H1 (cell line): ENCODE measurements at regions of chr12 and their contacts with region 1.

Region 1: GRCh38 chr12:69900720-69901131 is 75.7 kb downstream of the MYRFL start:
- DNase-seq: peak in 1 of 2 experiments; percentile 88
- H3K4me3 ChIP-seq: no peak overlapping the region
- H3K27ac ChIP-seq: no peak overlapping the region
- H3K4me1 ChIP-seq: peaks cover 2 to 27% (median 18%) of the 10 kb centered on the region in 4 experiments; a peak in 6 of 7 replicates
- H3K27me3 ChIP-seq: no peaks in the 10 kb centered on the region
- CTCF ChIP-seq: peak; percentile 5 to 75 (median 69)
- EP300 ChIP-seq: peak in 1 of 2 experiments; percentile 53; a peak in 1 of 3 replicates
- POLR2A ChIP-seq: no peak
- RAD21 ChIP-seq: peak; percentile 92 to 95

Region 2: GRCh38 chr12:69553627-69554248 is 347.0 kb before region 1 on chr12:
- CTCF ChIA-PET with region 1: no interaction called
- POLR2A ChIA-PET with region 1: no interaction called
- DNase-seq: no peak
- H3K4me3 ChIP-seq: no peak overlapping the region
- H3K27ac ChIP-seq: no peak overlapping the region
- H3K4me1 ChIP-seq: peaks cover 0 to 2% (median 0%) of the 10 kb centered on the region in 4 experiments; a peak in 1 of 7 replicates
- H3K27me3 ChIP-seq: no peaks in the 10 kb centered on the region
- CTCF ChIP-seq: no peak
- EP300 ChIP-seq: no peak
- POLR2A ChIP-seq: no peak
- RAD21 ChIP-seq: no peak

Region 3: DNA sequence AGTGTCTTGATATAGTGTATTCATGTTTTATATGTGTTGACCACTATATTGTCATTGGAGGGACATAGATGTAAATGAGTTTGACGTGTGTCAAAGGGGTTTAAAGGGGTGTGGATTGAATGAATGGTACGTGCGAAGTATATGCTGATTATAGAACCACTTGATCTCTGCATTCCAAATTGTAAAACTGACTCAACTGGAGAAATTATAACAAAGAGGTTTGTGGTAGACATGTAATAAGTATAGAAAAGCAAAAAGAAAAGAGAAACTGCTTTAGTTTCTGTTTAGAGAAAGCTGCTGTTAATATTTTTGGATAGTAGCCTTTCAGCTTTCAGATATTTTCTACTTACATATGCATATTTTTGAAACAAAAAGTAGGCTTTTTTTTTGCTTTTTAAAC is 84.6 kb before region 1 on chr12:
- CTCF ChIA-PET with region 1: no interaction called
- POLR2A ChIA-PET with region 1: no interaction called
- DNase-seq: no peak
- H3K4me3 ChIP-seq: no peak overlapping the region
- H3K27ac ChIP-seq: no peak overlapping the region
- H3K4me1 ChIP-seq: no peaks in the 10 kb centered on the region
- H3K27me3 ChIP-seq: no peaks in the 10 kb centered on the region
- CTCF ChIP-seq: no peak
- EP300 ChIP-seq: no peak
- POLR2A ChIP-seq: no peak
- RAD21 ChIP-seq: no peak

Region 4: DNA sequence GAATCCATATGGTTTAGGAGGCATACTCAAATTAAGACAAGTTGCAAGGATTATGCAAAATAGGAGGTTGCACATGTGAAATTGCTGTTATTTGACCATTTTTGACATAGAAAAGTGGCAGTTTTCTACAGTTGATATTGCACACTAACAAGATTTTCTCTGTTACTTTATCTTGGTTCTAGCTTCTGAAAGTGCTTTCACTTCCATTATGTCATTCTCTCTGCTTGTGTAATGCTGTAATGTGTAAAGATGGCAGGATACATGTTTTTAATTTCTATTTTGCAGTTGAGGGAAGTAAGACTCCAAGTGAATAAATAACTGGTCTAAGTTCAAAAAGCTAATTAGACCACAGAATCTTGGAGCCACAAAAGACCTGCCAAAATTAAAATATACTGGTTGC is 15.1 kb before region 1 on chr12:
- CTCF ChIA-PET with region 1: interaction called, 29 read pairs
- POLR2A ChIA-PET with region 1: interaction called, 3 read pairs
- DNase-seq: no peak
- H3K4me3 ChIP-seq: no peak overlapping the region
- H3K27ac ChIP-seq: no peak overlapping the region
- H3K4me1 ChIP-seq: 0 out of 7 replicates have a peak, but pooled peaks cover 0 to 2% (median 0%) of the 10 kb centered on the region in 4 experiments
- H3K27me3 ChIP-seq: no peaks in the 10 kb centered on the region
- CTCF ChIP-seq: no peak
- EP300 ChIP-seq: no peak
- POLR2A ChIP-seq: no peak
- RAD21 ChIP-seq: no peak

Region 5: DNA sequence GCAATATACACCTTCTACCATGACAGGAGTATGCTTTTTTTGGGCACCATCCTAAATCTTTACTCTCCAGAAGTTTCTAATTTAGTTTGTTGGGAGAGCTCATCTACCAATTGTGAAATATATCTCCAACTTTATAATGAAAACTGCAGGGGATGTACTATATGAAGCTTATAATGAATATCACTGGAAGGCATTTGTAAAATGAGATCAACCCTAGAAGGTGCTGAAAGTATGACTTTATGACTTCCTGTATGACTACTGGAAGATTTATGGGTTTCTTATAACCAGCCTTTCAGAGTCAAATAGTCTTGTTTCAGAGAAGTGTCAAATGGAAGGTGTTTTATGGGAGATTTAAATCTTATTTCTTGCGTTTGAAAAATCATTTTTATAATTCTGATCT is 47.2 kb after region 1 on chr12:
- CTCF ChIA-PET with region 1: interaction called, 11 read pairs
- POLR2A ChIA-PET with region 1: no interaction called
- DNase-seq: no peak
- H3K4me3 ChIP-seq: no peak overlapping the region
- H3K27ac ChIP-seq: no peak overlapping the region
- H3K4me1 ChIP-seq: peaks cover 0 to 4% (median 2%) of the 10 kb centered on the region in 4 experiments; a peak in 3 of 7 replicates
- H3K27me3 ChIP-seq: no peaks in the 10 kb centered on the region
- CTCF ChIP-seq: no peak
- EP300 ChIP-seq: no peak
- POLR2A ChIP-seq: no peak
- RAD21 ChIP-seq: no peak

Region 6: GRCh38 chr12:69961246-69961645 is 60.5 kb after region 1 on chr12:
- CTCF ChIA-PET with region 1: interaction called, 12 read pairs
- POLR2A ChIA-PET with region 1: no interaction called
- DNase-seq: no peak
- H3K4me3 ChIP-seq: no peak overlapping the region
- H3K27ac ChIP-seq: no peak overlapping the region
- H3K4me1 ChIP-seq: 0 out of 7 replicates have a peak, but pooled peaks cover 0 to 2% (median 0%) of the 10 kb centered on the region in 4 experiments
- H3K27me3 ChIP-seq: no peaks in the 10 kb centered on the region
- CTCF ChIP-seq: no peak
- EP300 ChIP-seq: no peak
- POLR2A ChIP-seq: no peak
- RAD21 ChIP-seq: no peak